K562 (cell line): ENCODE measurements at regions of chr5 and their contacts with region 1.

Region 1: DNA sequence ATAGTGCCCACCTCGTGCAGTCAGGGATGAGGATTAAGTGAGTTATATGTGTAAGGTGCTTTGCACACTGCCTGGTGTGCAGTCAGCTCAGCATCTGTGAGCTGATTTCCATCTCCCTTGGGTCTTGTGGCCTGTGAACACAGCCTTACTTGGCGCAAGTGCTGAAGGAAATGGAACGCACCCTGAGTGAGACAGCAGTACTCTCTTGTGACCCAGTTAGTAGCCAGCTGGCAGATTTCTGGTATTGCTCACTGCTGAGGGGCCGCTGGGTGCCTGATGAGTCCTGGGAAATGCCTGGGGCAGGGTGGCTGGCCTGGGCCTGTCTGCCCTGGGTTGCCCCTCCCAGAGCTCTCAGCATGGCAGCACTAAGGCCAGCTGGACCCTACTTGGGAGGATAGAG is 90.9 kb upstream of the BOD1 start:
- DNase-seq: no peak
- ATAC-seq: no peak
- H3K4me3 ChIP-seq: no peak overlapping the region
- H3K27ac ChIP-seq: no peak overlapping the region
- H3K4me1 ChIP-seq: peaks cover 13 to 24% of the 10 kb centered on the region in 2 experiments; a peak in 4 of 5 replicates
- H3K27me3 ChIP-seq: no peaks in the 10 kb centered on the region
- CTCF ChIP-seq: no peak
- EP300 ChIP-seq: no peak
- POLR2A ChIP-seq: no peak
- RAD21 ChIP-seq: no peak

Region 2: DNA sequence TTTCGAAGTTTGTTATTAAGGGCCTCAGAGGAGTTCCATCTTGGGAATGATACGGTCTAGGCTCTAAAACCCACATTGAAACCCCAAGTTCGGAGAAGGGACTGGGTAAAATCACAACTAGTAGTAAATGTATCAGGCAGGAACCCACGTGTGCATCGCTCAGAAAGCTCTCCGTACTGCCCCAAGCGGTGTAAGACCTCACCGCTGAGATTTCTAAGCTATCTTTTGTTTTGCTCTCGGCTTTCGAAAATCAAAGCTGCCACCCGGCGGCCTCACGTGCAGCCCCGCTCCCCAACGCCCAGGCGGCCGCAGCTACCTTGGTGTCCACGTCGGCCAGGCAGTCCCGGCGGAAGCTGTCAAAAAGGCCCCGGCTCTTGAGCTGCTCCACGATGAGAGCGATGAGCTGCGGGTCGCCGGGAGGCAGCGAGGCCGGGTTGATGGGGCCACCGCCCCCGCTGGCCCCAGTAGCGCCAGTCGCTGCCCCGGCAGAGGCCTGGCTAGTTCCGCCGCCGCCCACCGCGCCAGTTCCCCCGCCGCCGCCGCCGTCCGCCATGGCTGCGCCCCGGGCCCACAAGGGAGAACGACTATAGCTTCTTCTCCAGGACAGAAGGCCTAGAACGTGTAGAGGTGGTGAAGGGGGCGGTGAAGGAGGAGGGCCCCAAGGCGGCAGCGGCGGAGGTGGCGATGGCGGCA is 91.4 kb before region 1 on chr5:
- CTCF ChIA-PET with region 1: no interaction called
- POLR2A ChIA-PET with region 1: no interaction called
- in situ Hi-C with region 1: no loop called
- intact Hi-C with region 1: no loop called
- DNase-seq: peak; percentile 61 to 78 (median 66)
- ATAC-seq: peak; percentile 86
- H3K4me3 ChIP-seq: peak overlapping the region; percentile 95
- H3K27ac ChIP-seq: peak overlapping the region; percentile 46
- H3K4me1 ChIP-seq: peaks cover 4 to 9% of the 10 kb centered on the region in 2 experiments; a peak in 3 of 5 replicates
- H3K27me3 ChIP-seq: no peaks in the 10 kb centered on the region
- CTCF ChIP-seq: peak; percentile 74 to 75 (median 75)
- EP300 ChIP-seq: no peak
- POLR2A ChIP-seq: no peak
- RAD21 ChIP-seq: peak; percentile 10 to 29; a peak in 2 of 4 replicates

Region 3: DNA sequence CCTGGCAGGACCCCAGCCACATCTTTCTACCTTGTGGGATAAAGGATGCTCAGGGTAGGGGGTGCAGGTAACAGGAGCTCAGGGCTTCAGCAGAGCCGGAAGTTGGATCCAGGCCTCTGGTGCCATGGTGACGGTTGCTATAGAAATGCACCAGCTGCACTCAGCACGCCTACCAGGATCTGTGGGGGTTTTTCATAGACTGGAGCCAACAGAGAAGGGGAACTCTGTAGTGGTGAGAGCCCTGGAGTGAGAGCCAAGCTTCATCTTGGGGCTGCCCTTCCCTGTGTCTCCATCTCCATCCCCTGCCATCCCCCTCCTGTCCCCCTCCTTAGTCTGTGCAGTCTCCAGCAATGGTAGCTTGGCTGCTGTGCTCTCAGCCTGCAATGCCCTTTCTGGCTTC is 63.4 kb before region 1 on chr5:
- CTCF ChIA-PET with region 1: no interaction called
- POLR2A ChIA-PET with region 1: no interaction called
- in situ Hi-C with region 1: no loop called
- intact Hi-C with region 1: loop called (anchors 5 kb)
- DNase-seq: no peak
- ATAC-seq: peak; percentile 13
- H3K4me3 ChIP-seq: no peak overlapping the region
- H3K27ac ChIP-seq: no peak overlapping the region
- H3K4me1 ChIP-seq: peaks cover 0 to 11% of the 10 kb centered on the region in 2 experiments; a peak in 4 of 5 replicates
- H3K27me3 ChIP-seq: peaks cover 0 to 37% of the 10 kb centered on the region in 2 experiments; a peak in 2 of 5 replicates
- CTCF ChIP-seq: no peak
- EP300 ChIP-seq: no peak
- POLR2A ChIP-seq: no peak
- RAD21 ChIP-seq: no peak

Region 4: GRCh38 chr5:173679909-173680630 is 27.3 kb before region 1 on chr5:
- CTCF ChIA-PET with region 1: no interaction called
- POLR2A ChIA-PET with region 1: no interaction called
- in situ Hi-C with region 1: no loop called
- intact Hi-C with region 1: no loop called
- DNase-seq: no peak
- ATAC-seq: no peak
- H3K4me3 ChIP-seq: no peak overlapping the region
- H3K27ac ChIP-seq: no peak overlapping the region
- H3K4me1 ChIP-seq: no peaks in the 10 kb centered on the region
- H3K27me3 ChIP-seq: no peaks in the 10 kb centered on the region
- CTCF ChIP-seq: no peak
- EP300 ChIP-seq: no peak
- POLR2A ChIP-seq: no peak
- RAD21 ChIP-seq: no peak